ENCODE measurements at regions of chr2 and their contacts with region 1.

Region 1: GRCh38 chr2:130797493-130798435 is 39.0 kb upstream of the ARHGEF4 start:
- DNase-seq: peak; percentile 91
- CTCF ChIP-seq: peak; percentile 99

Region 2: GRCh38 chr2:130261970-130262760 is 535.6 kb before region 1 on chr2:
- CTCF ChIA-PET with region 1: no interaction called
- POLR2A ChIA-PET with region 1: no interaction called
- DNase-seq: no peak
- CTCF ChIP-seq: no peak

Region 3: GRCh38 chr2:130785466-130786055 is 12.2 kb before region 1 on chr2:
- CTCF ChIA-PET with region 1: interaction called, 21 read pairs
- POLR2A ChIA-PET with region 1: no interaction called
- DNase-seq: no peak
- CTCF ChIP-seq: no peak

Region 4: GRCh38 chr2:130814931-130815680 is 17.3 kb after region 1 on chr2:
- CTCF ChIA-PET with region 1: interaction called, 13 read pairs
- POLR2A ChIA-PET with region 1: no interaction called
- DNase-seq: no peak
- CTCF ChIP-seq: no peak

Region 5: GRCh38 chr2:130842770-130843169 is 45.0 kb after region 1 on chr2:
- CTCF ChIA-PET with region 1: interaction called, 17 read pairs
- POLR2A ChIA-PET with region 1: no interaction called
- DNase-seq: no peak
- CTCF ChIP-seq: no peak

Region 6: DNA sequence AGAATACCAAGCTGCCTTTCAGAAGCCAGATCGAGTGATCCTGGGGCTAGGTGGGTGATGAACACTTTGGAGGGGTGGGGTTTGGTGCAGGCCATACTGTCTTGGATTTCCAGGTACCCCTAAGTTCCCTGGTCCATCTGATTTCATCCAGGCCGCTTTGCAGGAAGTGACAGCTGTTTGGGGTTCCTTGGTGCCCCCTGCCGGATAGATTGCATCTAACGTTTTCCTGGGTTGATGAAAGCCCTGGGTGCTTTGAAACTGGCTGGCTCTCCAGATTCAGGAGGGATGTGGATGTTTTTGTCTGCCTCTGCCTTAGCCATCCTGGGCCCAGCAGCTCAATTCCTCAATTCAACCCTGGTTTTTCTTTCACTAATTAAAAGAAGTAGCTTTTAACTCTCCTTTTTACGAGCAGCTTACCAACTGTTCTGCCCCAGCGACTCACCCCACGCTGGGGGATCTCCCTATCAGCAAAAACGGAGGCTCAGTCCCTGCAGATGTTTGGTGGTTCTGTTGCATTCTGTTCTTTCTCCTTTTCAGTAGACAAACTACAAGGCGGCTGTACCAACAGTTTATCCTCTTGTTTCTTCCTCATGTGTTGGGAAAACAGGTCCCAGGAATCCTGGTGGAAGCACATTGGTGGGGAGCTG is 76.1 kb after region 1 on chr2:
- CTCF ChIA-PET with region 1: interaction called, 238 read pairs
- POLR2A ChIA-PET with region 1: no interaction called
- DNase-seq: peak; percentile 79
- CTCF ChIP-seq: peak; percentile 70

Region 7: DNA sequence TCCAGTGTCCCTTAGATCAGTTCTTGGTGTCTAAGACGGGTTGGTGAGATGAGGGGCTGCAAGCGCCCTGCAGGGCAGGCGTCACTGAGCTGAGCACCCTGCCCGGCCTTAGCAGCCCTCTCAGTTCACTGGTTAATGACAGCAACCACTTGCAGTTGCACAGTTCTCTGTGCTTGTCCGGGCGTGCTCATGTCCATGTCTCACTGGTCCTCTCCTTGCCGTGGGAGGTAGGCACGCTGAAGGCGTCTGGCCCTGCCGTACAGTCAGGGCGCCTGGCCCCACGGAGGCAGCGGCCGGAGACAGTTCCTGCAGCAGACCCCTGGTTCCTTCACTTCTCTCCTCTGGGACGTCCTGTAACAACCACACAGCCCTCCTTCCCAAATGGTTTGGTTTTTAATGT is 114.2 kb after region 1 on chr2:
- CTCF ChIA-PET with region 1: interaction called, 55 read pairs
- POLR2A ChIA-PET with region 1: no interaction called
- DNase-seq: no peak
- CTCF ChIP-seq: no peak

Region 8: GRCh38 chr2:130928385-130928784 is 130.6 kb after region 1 on chr2:
- CTCF ChIA-PET with region 1: interaction called, 74 read pairs
- POLR2A ChIA-PET with region 1: no interaction called
- DNase-seq: no peak
- CTCF ChIP-seq: no peak

Measured in GM10248 (cell line).